HepG2 (cell line): ENCODE measurements at regions of chr6 and their contacts with region 1.

Region 1: DNA sequence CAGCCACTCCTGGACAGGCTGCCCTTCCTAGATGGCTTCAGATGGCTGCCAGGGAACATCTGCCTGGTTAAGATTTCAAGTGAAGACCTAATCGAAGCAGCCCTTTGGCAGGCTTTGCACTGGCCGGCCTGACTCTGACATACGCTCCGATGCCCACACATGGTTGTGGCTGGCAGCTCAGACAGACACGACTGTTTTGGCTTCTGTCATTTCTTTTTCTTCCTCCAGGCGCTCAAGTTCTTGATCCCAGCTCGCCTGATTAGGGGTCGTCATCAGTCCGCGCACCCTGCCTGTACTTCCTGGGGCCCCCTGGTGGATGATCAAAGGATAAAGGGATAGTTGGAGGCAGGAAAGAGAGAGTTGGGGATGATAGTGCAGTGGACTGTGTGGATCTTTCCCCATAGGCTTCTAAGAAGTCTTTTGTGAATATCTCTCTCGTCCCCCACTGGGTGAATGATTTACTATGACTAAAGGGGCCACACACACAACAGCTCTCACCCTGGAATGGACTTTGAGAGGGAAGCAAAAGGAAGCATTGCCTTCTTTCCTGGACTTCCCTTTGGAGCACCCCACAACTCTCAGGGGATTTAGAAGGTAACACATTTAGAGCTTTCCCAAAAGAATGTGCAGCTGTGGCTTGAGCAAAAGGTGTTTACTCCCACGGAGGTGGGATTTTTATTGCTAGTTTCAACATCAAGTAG is 21.4 kb upstream of the TRAM2 start:
- DNase-seq: peak; percentile 100
- ATAC-seq: peak; percentile 92
- H3K4me3 ChIP-seq: peak overlapping the region; percentile 42 to 73 (median 52); a peak in 5 of 6 replicates
- H3K27ac ChIP-seq: peak overlapping the region; percentile 98
- H3K4me1 ChIP-seq: peaks cover 81% of the 10 kb centered on the region
- H3K27me3 ChIP-seq: no peaks in the 10 kb centered on the region
- CTCF ChIP-seq: peak; percentile 96
- EP300 ChIP-seq: peak; percentile 77 to 91
- POLR2A ChIP-seq: peak; percentile 57 to 95; a peak in 3 of 4 replicates
- RAD21 ChIP-seq: peak; percentile 91

Region 2: DNA sequence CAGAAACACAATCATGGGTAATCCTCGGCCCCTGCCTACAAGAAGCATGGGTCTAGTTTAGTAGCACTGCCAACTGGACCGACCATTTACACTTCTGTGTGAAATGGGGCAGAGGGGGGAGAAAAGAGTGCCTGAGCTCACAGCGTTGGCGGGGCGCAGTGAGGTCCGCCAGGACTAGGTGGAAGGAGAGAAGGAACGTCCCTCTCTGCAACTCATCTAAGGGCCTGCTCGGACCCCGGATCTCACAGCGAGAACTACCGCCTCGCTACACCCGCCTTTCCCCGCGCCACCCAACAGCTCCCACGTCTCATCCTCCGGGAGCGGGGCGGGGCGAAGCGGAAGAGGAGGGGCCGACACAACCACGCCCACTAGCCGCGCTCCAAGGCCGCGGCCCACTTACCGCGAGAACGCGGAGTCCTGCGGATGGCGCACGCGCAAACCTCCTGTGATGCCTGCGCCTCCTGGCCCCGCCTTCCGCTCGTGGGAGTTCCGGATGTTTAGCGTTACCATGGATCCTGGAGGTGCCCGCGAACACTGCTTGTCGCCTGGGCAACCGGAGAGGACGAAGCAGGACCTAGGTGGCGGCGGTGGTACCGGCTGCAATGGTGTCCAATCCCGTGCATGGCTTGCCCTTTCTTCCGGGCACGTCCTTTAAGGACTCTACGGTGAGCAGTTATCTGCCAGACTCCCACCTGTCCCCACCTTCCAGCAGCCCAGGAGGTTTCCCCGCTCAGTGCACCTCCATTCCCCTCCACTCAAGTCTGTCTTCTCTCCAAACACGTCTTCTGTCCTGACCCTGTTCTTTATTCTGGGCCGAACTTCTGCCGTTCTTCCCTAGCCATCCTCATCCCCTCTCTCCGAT is 178.2 kb before region 1 on chr6 and contains the start of gene EFHC1:
- CTCF ChIA-PET with region 1: interaction called, 12 read pairs
- POLR2A ChIA-PET with region 1: interaction called, 37 read pairs
- in situ Hi-C with region 1: loop called (anchors 5 kb)
- intact Hi-C with region 1: loop called (anchors 1 kb)
- DNase-seq: peak; percentile 98
- ATAC-seq: peak; percentile 96
- H3K4me3 ChIP-seq: peak within 1 kb of the TSS; percentile 78 to 99 (median 90)
- H3K27ac ChIP-seq: peak within 1 kb of the TSS; percentile 91
- H3K4me1 ChIP-seq: peaks cover 62% of the 10 kb centered on the region
- H3K27me3 ChIP-seq: peaks cover 0 to 4% of the 10 kb centered on the region in 2 experiments; a peak in 1 of 5 replicates
- CTCF ChIP-seq: peak; percentile 33
- EP300 ChIP-seq: no peak; a peak in 1 of 4 replicates
- POLR2A ChIP-seq: peak; percentile 97 to 98
- RAD21 ChIP-seq: peak; percentile 72
- total RNA-seq, gene EFHC1: 18.6 and 23.4 TPM in 2 replicates

Region 3: GRCh38 chr6:52543729-52544601 is 54.3 kb before region 1 on chr6:
- CTCF ChIA-PET with region 1: interaction called, 4 read pairs
- POLR2A ChIA-PET with region 1: interaction called, 30 read pairs
- in situ Hi-C with region 1: no loop called
- intact Hi-C with region 1: loop called (anchors 1 kb)
- DNase-seq: peak; percentile 87
- ATAC-seq: peak; percentile 66
- H3K4me3 ChIP-seq: peak overlapping the region; percentile 1 to 31 (median 30); a peak in 5 of 6 replicates
- H3K27ac ChIP-seq: peak overlapping the region; percentile 77
- H3K4me1 ChIP-seq: peaks cover 100% of the 10 kb centered on the region
- H3K27me3 ChIP-seq: no peaks in the 10 kb centered on the region
- CTCF ChIP-seq: no peak
- EP300 ChIP-seq: peak in 1 of 2 experiments; percentile 93; a peak in 2 of 4 replicates
- POLR2A ChIP-seq: 0 out of 4 replicates have a peak, but pooled peaks of 1 of the 2 experiments have one; percentile 24
- RAD21 ChIP-seq: no peak

Region 4: GRCh38 chr6:52566853-52567279 is 31.4 kb before region 1 on chr6:
- CTCF ChIA-PET with region 1: no interaction called
- POLR2A ChIA-PET with region 1: interaction called, 14 read pairs
- in situ Hi-C with region 1: no loop called
- intact Hi-C with region 1: no loop called
- DNase-seq: peak; percentile 58
- ATAC-seq: peak; percentile 63
- H3K4me3 ChIP-seq: no peak overlapping the region
- H3K27ac ChIP-seq: no peak overlapping the region
- H3K4me1 ChIP-seq: peaks cover 97% of the 10 kb centered on the region
- H3K27me3 ChIP-seq: no peaks in the 10 kb centered on the region
- CTCF ChIP-seq: no peak
- EP300 ChIP-seq: 0 out of 4 replicates have a peak, but pooled peaks of 1 of the 2 experiments have one; percentile 17
- POLR2A ChIP-seq: no peak
- RAD21 ChIP-seq: no peak

Region 5: GRCh38 chr6:52664186-52664990 is 66.1 kb after region 1 on chr6:
- CTCF ChIA-PET with region 1: interaction called, 7 read pairs
- POLR2A ChIA-PET with region 1: interaction called, 11 read pairs
- in situ Hi-C with region 1: loop called (anchors 5 kb)
- intact Hi-C with region 1: loop called (anchors 1 kb)
- DNase-seq: peak; percentile 97
- ATAC-seq: peak; percentile 96
- H3K4me3 ChIP-seq: peak overlapping the region; percentile 72 to 89 (median 89)
- H3K27ac ChIP-seq: peak overlapping the region; percentile 64
- H3K4me1 ChIP-seq: peaks cover 50% of the 10 kb centered on the region
- H3K27me3 ChIP-seq: no peaks in the 10 kb centered on the region; a peak in 1 of 5 replicates
- CTCF ChIP-seq: no peak
- EP300 ChIP-seq: no peak; a peak in 1 of 4 replicates
- POLR2A ChIP-seq: peak; percentile 96 to 98
- RAD21 ChIP-seq: peak; percentile 40